Right ventricle myocardium superior (tissue), 1 donor: ENCODE measurements at regions of chr15 and their contacts with region 1.

Region 1: GRCh38 chr15:48440084-48440483 is 108.9 kb downstream of the DUT start:
- DNase-seq: peak; percentile 55
- ATAC-seq: peak; percentile 83

Region 2: GRCh38 chr15:47908950-47909670 is 531.0 kb before region 1 on chr15:
- intact Hi-C with region 1: no loop called
- DNase-seq: no peak
- ATAC-seq: no peak

Region 3: DNA sequence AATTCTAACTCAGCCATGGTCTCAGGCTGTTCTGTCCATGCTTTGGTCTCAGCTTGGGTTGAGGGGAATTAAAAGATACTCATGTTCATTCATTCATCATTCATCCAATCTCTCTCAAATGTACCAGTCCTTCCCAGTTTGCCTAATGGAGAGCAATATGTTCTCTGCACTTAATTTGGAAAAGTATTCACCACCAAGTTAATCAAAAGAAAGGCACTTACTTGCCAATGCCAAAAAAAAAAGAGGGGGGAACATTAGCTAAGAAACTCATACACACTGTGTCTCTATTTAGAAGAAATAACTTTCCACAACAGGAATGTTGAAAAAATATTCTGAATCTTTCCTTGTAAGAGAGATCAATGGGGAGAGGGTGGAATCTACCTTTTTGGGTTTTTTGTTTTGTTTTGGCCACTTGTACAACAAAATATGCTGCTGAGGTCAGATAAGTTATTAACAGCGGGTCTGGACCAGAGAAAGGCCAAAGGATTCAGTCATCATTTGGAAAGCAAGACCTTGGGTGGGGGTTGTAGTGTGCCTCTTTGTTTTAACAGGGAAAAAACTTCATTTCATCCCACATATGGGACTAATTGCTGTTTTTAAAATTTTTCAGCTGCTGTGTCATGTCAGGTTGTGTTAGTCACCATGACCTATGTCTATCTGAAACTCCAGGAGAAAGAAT is 53.1 kb after region 1 on chr15:
- intact Hi-C with region 1: loop called (anchors 10 kb)
- DNase-seq: no peak
- ATAC-seq: peak; percentile 91

Region 4: GRCh38 chr15:48565560-48566482 is 125.7 kb after region 1 on chr15:
- intact Hi-C with region 1: no loop called
- DNase-seq: no peak
- ATAC-seq: peak; percentile 59